Right ventricle myocardium inferior (tissue), 1 donor: ENCODE measurements at regions of chr10 and their contacts with region 1.

Region 1: GRCh38 chr10:68560186-68560942 is at the start of gene TET1:
- DNase-seq: no peak
- ATAC-seq: peak; percentile 81
- total RNA-seq, gene TET1: 3.1 TPM

Region 2: GRCh38 chr10:68526626-68527307 is 33.6 kb before region 1 on chr10:
- intact Hi-C with region 1: no loop called
- DNase-seq: no peak
- ATAC-seq: peak; percentile 64

Region 3: GRCh38 chr10:68598978-68599770 is 38.8 kb after region 1 on chr10:
- intact Hi-C with region 1: loop called (anchors 5 kb)
- DNase-seq: no peak
- ATAC-seq: peak; percentile 44